A673 (cell line): ENCODE measurements at regions of chr13 and their contacts with region 1.

Region 1: DNA sequence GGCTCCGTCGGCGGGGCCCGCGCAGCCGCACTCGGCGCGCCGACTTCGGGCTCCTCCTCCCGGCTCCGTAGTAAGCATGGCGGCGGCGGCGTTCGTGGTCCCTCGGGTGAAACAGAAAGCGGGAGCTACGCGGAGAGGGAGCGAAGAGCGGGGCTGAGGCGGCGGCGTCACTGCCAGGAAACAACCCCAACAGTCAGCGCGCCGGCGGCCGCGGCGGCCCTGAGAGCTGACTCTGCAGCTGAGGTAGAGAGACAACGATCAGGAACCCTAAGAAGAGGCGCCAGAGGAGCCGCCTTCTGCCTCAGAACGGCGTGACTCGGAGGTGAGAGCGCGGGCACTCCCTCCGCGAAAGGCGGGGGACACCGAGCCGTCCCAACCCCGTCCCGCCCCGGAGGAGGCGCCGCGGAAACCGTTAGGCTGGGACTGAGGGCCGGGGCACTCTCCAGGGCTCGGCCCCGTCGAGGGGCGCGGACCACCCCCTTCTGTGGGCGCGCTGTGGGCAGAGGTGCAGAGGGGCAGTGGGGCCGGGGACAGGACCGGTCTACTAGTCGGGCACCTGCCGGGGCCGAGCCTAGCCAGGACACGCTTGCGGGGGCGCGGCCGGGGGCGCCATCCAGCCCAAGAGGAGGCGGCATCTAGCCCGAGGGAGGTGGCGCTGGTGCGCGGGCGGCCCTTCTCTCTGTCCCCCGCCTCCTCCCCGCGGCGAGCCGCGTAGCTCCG is at the start of gene FNDC3A:
- DNase-seq: peak; percentile 90
- H3K4me3 ChIP-seq: peak within 1 kb of the TSS; percentile 73
- H3K27ac ChIP-seq: peak within 1 kb of the TSS; percentile 96
- H3K4me1 ChIP-seq: peaks cover 20% of the 10 kb centered on the region
- H3K27me3 ChIP-seq: no peaks in the 10 kb centered on the region
- CTCF ChIP-seq: peak; percentile 27; the same call in 1 of the 2 replicates
- total RNA-seq, gene FNDC3A: 45.5 and 49.3 TPM in 2 replicates

Region 2: GRCh38 chr13:49110122-49110912 is 134.3 kb after region 1 on chr13:
- CTCF ChIA-PET with region 1: no interaction called
- POLR2A ChIA-PET with region 1: no interaction called
- intact Hi-C with region 1: loop called (anchors 5 kb)
- DNase-seq: peak; percentile 94
- H3K4me3 ChIP-seq: peak overlapping the region; percentile 57
- H3K27ac ChIP-seq: peak overlapping the region; percentile 70
- H3K4me1 ChIP-seq: peaks cover 14% of the 10 kb centered on the region
- H3K27me3 ChIP-seq: no peaks in the 10 kb centered on the region
- CTCF ChIP-seq: no peak

Region 3: DNA sequence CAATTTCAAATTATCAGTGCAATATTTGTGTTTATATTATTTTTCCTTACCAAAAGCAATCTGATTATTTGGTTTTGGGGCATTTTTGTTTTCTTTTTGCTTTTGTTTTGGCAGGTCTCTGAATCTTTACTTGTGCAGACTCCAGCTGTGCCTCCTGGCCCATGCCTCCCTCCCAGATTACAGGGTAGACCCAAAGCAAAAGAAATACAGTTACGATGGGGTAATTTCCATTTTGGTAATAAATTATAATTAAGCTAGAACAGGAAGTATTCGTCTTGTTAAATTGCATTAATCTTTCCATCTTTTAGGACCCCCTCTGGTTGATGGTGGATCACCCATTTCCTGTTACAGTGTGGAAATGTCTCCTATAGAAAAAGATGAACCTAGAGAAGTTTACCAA is 214.9 kb after region 1 on chr13:
- CTCF ChIA-PET with region 1: no interaction called
- POLR2A ChIA-PET with region 1: no interaction called
- intact Hi-C with region 1: loop called (anchors 5 kb)
- DNase-seq: peak; percentile 95
- H3K4me3 ChIP-seq: peak overlapping the region; percentile 1
- H3K27ac ChIP-seq: peak overlapping the region; percentile 79
- H3K4me1 ChIP-seq: peaks cover 35% of the 10 kb centered on the region
- H3K27me3 ChIP-seq: no peaks in the 10 kb centered on the region
- CTCF ChIP-seq: no peak